CD8-positive, alpha-beta T cell (primary cell): ENCODE measurements at regions of chrX and their contacts with region 1.

Region 1: GRCh38 chrX:113429036-113429435 is 588.4 kb upstream of the AMOT start:
- DNase-seq: no peak
- ATAC-seq: no peak
- H3K4me3 ChIP-seq: no peak overlapping the region
- H3K4me3 Mint-ChIP-seq: no peak overlapping the region
- H3K27ac ChIP-seq: no peak overlapping the region
- H3K27ac Mint-ChIP-seq: no peak overlapping the region
- H3K4me1 ChIP-seq: no peaks in the 10 kb centered on the region
- H3K4me1 Mint-ChIP-seq: no peaks in the 10 kb centered on the region
- H3K27me3 ChIP-seq: no peaks in the 10 kb centered on the region
- H3K27me3 Mint-ChIP-seq: no peaks in the 10 kb centered on the region
- CTCF ChIP-seq: no peak

Region 2: DNA sequence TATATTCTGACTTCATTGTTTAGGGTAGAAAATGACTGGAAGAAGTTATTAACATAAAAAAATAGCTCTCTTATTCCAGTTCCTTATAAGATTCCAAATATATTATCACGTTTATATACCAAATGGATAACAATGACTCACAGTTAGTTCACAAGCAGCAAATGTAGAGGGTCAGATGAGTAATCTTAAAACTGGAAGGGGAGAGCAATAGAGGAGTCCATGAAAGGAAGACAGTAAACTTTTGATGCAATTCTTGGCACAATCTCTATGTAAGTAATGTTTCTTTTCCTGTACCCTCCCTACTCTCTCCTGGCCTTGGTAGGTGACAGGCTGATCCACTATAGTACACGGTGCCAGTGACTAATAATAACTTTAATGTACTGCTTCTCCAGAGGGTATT is 1087.4 kb before region 1 on chrX:
- CTCF ChIA-PET with region 1: no interaction called
- POLR2A ChIA-PET with region 1: no interaction called
- intact Hi-C with region 1: loop called in 1 of 2 experiments (anchors 10 kb)
- DNase-seq: no peak
- ATAC-seq: no peak
- H3K4me3 ChIP-seq: no peak overlapping the region
- H3K4me3 Mint-ChIP-seq: no peak overlapping the region
- H3K27ac ChIP-seq: no peak overlapping the region
- H3K27ac Mint-ChIP-seq: no peak overlapping the region
- H3K4me1 ChIP-seq: no peaks in the 10 kb centered on the region
- H3K4me1 Mint-ChIP-seq: no peaks in the 10 kb centered on the region
- H3K27me3 ChIP-seq: no peaks in the 10 kb centered on the region
- H3K27me3 Mint-ChIP-seq: no peaks in the 10 kb centered on the region
- CTCF ChIP-seq: no peak